Transverse colon (tissue), 4 donors: ENCODE measurements at regions of chr5 and their contacts with region 1.

Region 1: GRCh38 chr5:149828161-149828884 is 98.2 kb downstream of the PPARGC1B start:
- DNase-seq: peak; percentile 92
- H3K4me3 ChIP-seq: no peak overlapping the region
- H3K27ac ChIP-seq: peak overlapping the region; percentile 77 to 86 (median 82)
- H3K4me1 ChIP-seq: peaks cover 15 to 38% (median 24%) of the 10 kb centered on the region in 4 donors
- H3K27me3 ChIP-seq: no peaks in the 10 kb centered on the region
- CTCF ChIP-seq: peak; percentile 84 to 92 (median 90)
- EP300 ChIP-seq: no peak
- POLR2A ChIP-seq: no peak

Region 2: GRCh38 chr5:149636851-149637246 is 191.5 kb before region 1 on chr5:
- in situ Hi-C with region 1: loop called (anchors 5 to 10 kb)
- intact Hi-C with region 1: no loop called
- DNase-seq: no peak
- H3K4me3 ChIP-seq: no peak overlapping the region
- H3K27ac ChIP-seq: no peak overlapping the region
- H3K4me1 ChIP-seq: peaks cover 25 to 36% (median 30%) of the 10 kb centered on the region in 4 donors
- H3K27me3 ChIP-seq: no peaks in the 10 kb centered on the region
- CTCF ChIP-seq: peak; percentile 70 to 96 (median 83)
- EP300 ChIP-seq: no peak
- POLR2A ChIP-seq: no peak

Region 3: GRCh38 chr5:149667084-149667828 is 161.1 kb before region 1 on chr5:
- in situ Hi-C with region 1: loop called in 2 of 4 experiments (anchors 10 kb)
- intact Hi-C with region 1: no loop called
- DNase-seq: peak; percentile 42
- H3K4me3 ChIP-seq: no peak overlapping the region
- H3K27ac ChIP-seq: peak overlapping the region; percentile 61 to 70 (median 66)
- H3K4me1 ChIP-seq: peaks cover 12 to 38% (median 19%) of the 10 kb centered on the region in 4 donors
- H3K27me3 ChIP-seq: no peaks in the 10 kb centered on the region
- CTCF ChIP-seq: peak; percentile 82 to 93 (median 92)
- EP300 ChIP-seq: no peak
- POLR2A ChIP-seq: no peak

Region 4: DNA sequence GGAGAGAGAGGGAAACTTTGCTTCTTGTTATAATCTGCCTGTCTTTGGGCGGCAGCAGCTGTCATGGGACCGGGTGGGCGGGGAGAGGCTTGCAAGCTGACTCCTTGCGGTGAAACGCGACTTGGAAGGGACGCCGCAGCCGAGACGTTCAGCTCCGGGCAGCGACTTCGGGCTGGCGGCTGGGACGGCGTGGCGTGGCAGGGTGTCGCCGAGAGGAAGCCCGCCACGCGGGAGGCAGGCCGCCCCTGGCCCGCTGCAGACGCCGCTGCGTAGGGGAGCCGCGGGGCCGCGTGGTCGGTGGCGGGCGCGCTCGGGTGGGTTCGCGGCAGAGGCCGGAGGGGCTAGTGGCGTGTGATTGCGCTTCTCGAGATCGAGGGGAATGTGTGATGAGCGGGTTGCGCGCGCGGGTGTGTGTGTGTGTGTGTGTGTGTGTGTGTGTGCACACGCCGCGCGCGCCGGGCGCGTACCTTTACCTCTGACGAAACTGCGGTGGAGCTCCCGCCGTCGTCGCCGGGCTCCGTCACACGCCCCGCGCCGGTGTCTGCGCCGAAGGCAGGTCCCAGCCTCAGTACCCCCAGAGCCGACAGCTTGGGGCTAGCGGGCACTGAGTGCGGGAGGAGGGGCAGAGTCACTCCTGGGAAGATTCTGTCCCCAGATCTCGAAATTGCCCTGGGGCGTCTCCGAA is 96.5 kb before region 1 on chr5:
- in situ Hi-C with region 1: no loop called
- intact Hi-C with region 1: loop called (anchors 1 kb)
- DNase-seq: peak; percentile 91
- H3K4me3 ChIP-seq: peak overlapping the region; percentile 86 to 98 (median 97)
- H3K27ac ChIP-seq: peak overlapping the region; percentile 92 to 99 (median 96)
- H3K4me1 ChIP-seq: peaks cover 10 to 54% (median 33%) of the 10 kb centered on the region in 4 donors
- H3K27me3 ChIP-seq: no peaks in the 10 kb centered on the region
- CTCF ChIP-seq: peak in 1 of 5 experiments; percentile 26
- EP300 ChIP-seq: no peak
- POLR2A ChIP-seq: peak; percentile 47

Region 5: GRCh38 chr5:150122158-150122510 is 293.8 kb after region 1 on chr5:
- in situ Hi-C with region 1: loop called in 1 of 4 experiments (anchors 25 kb)
- intact Hi-C with region 1: no loop called
- DNase-seq: peak; percentile 88
- H3K4me3 ChIP-seq: no peak overlapping the region
- H3K27ac ChIP-seq: peak overlapping the region in 3 of 4 donors; percentile 20 to 35 (median 20)
- H3K4me1 ChIP-seq: peaks cover 0 to 13% (median 0%) of the 10 kb centered on the region in 4 donors
- H3K27me3 ChIP-seq: no peaks in the 10 kb centered on the region
- CTCF ChIP-seq: peak; percentile 29 to 77 (median 51)
- EP300 ChIP-seq: no peak
- POLR2A ChIP-seq: no peak

Region 6: GRCh38 chr5:150217873-150218692 is 389.8 kb after region 1 on chr5:
- in situ Hi-C with region 1: loop called in 1 of 4 experiments (anchors 25 kb)
- intact Hi-C with region 1: no loop called
- DNase-seq: peak; percentile 90
- H3K4me3 ChIP-seq: no peak overlapping the region
- H3K27ac ChIP-seq: peak overlapping the region in 3 of 4 donors; percentile 65 to 79 (median 72)
- H3K4me1 ChIP-seq: peaks cover 19 to 33% (median 28%) of the 10 kb centered on the region in 4 donors
- H3K27me3 ChIP-seq: no peaks in the 10 kb centered on the region
- CTCF ChIP-seq: peak; percentile 89 to 96 (median 94)
- EP300 ChIP-seq: no peak
- POLR2A ChIP-seq: no peak

Region 7: GRCh38 chr5:150846654-150847333 is 1018.5 kb after region 1 on chr5:
- in situ Hi-C with region 1: no loop called
- intact Hi-C with region 1: no loop called
- DNase-seq: peak; percentile 30
- H3K4me3 ChIP-seq: no peak overlapping the region
- H3K27ac ChIP-seq: peak overlapping the region in 1 of 4 donors; percentile 15
- H3K4me1 ChIP-seq: peaks cover 0 to 2% (median 0%) of the 10 kb centered on the region in 4 donors
- H3K27me3 ChIP-seq: no peaks in the 10 kb centered on the region
- CTCF ChIP-seq: peak; percentile 64 to 84 (median 72)
- EP300 ChIP-seq: no peak
- POLR2A ChIP-seq: no peak